ENCODE measurements at regions of chr1 and their contacts with region 1.

Region 1: DNA sequence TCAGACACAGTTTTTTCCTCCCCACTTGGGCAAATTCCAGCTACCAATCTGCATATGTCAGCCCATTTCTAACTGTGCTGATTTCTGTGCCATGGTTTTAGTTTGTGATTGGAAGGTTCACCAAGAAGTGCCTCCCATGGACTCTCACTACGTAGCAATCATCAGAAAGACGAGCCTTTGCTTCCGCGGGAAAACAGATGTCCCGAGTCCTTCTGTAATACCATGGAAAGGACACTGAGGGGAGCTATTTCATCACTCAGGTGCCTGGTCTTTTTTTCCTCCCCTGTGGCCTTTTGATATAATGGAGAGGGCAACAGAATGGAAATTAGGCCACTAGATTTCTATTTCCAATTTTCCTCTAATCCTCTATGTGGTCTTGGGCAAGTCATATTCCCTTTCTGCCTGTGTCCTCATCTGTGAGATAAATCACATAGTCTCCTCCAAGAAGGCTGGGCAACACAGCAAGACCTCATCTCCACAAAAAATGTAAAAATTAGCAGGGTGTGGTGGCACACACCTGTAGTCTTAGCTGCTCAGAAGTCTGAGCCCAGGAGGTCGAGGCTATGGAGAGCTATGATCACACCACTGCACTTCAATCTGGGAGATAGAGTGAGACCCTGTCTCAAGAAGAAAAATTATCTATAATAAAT is 24.8 kb downstream of the LEMD1 start:
- DNase-seq: peak; percentile 27
- H3K4me3 Mint-ChIP-seq: no peak overlapping the region
- H3K27ac Mint-ChIP-seq: no peak overlapping the region
- H3K4me1 Mint-ChIP-seq: no peaks in the 10 kb centered on the region
- H3K27me3 Mint-ChIP-seq: peaks cover 48% of the 10 kb centered on the region

Region 2: DNA sequence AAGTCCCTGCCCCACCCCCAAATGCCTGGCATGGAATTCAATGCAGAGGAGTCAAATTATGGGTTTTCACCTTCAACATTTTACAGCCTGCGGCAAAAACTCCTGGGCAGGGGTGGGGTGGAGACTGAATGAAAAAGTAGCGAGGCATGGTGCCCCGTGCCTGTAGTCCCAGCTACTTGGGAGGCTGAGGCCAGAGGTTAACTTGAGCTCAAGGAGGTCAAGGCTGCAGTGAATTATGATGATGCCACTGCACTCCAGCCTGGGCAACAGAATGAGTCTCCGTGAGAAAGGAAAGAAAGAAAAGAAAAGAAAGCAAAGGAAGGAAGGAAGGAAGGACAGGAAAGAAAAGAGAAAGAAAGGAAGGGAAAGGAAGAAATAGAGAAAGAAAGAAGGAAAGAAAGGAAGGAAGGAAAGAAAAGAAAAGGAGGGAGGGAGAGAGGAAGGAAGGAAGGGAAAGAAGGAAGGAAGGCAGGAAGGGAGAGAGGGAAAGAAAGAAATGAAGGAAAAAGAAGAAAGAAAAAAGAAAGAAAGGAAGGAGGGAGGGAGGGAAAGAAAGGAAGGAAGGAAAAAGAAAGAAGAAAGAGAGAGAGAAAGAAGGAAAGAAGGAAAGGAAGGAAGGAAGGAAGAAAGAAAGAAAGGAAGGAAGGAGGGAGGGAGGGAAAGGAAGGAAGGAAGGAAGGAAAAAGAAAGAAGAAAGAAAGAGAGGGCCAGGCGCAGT is 13.6 kb after region 1 on chr1:
- CTCF ChIA-PET with region 1: no interaction called
- DNase-seq: no peak
- H3K4me3 Mint-ChIP-seq: no peak overlapping the region
- H3K27ac Mint-ChIP-seq: no peak overlapping the region
- H3K4me1 Mint-ChIP-seq: peaks cover 9% of the 10 kb centered on the region
- H3K27me3 Mint-ChIP-seq: peaks cover 54% of the 10 kb centered on the region

Region 3: DNA sequence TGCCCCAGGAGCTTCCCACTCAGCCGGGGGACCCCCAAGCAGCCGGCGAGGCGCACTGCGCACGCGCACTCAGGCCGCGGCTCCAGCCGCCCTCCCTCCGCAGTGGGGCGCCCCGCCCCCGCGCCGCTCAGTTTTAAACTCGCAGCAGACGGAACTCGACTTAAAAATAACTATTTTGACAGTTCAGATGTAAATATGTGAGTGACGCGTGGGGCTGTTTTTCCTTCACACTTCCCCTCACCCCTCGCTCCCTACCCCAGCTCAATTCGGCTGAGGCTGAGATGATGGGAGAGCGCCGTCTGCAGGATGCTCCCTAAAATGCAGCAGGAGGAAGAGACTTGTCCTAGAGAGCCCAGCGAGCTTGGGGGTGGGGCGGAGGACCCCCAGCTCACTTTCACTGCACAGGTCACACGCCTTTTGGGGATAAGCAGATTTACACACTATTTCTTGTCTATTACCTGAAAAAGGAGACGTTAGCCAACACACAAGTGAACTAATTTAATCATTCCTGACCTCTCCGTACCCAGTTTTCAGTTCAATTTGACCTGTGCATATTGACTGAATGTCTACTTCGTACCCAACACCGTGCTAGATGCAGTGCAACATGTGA is 33.7 kb after region 1 on chr1:
- CTCF ChIA-PET with region 1: interaction called, 17 read pairs
- DNase-seq: peak; percentile 71
- H3K4me3 Mint-ChIP-seq: peak overlapping the region; percentile 74
- H3K27ac Mint-ChIP-seq: peak overlapping the region; percentile 26
- H3K4me1 Mint-ChIP-seq: peaks cover 9% of the 10 kb centered on the region
- H3K27me3 Mint-ChIP-seq: peaks cover 82% of the 10 kb centered on the region